B cell (primary cell): ENCODE measurements at regions of chr2 and their contacts with region 1.

Region 1: DNA sequence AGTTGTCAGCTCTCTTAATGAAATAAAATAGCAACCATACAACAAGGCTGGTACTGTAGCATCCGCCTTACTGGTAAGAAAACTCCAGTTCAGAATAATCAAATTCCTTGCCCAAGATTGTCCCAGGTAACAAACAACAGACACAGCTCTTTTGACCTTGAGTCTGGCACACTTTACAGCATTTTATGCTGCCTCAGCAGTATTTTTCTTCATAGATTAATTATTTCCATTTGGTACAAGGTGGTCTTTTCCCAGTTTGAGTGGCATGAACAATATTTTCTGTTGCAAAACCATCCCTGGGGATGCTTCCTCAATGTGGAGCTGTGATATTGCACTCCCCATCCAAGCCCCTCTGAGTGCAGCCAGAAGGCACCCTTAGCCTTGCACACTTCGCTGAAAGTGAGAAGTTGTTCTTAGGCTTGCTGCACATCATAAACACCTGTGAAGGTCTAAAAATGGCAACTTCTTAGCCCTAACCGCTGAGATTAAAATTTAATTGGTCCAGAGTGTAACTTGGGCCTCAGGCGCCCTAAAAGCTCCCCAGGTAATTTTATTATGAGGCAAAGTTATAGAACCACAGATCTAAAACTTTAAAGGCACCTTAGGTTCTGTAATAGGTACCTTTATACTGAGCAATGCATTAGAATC is 523.3 kb downstream of the CMPK2 start:
- DNase-seq: no peak
- ATAC-seq: no peak
- H3K4me3 ChIP-seq: no peak overlapping the region
- H3K4me3 Mint-ChIP-seq: no peak overlapping the region
- H3K27ac ChIP-seq: no peak overlapping the region
- H3K27ac Mint-ChIP-seq: no peak overlapping the region
- H3K4me1 ChIP-seq: peaks cover 41% of the 10 kb centered on the region in 2 donors
- H3K4me1 Mint-ChIP-seq: peaks cover 41% of the 10 kb centered on the region
- H3K27me3 ChIP-seq: no peaks in the 10 kb centered on the region
- H3K27me3 Mint-ChIP-seq: no peaks in the 10 kb centered on the region
- CTCF ChIP-seq: no peak

Region 2: DNA sequence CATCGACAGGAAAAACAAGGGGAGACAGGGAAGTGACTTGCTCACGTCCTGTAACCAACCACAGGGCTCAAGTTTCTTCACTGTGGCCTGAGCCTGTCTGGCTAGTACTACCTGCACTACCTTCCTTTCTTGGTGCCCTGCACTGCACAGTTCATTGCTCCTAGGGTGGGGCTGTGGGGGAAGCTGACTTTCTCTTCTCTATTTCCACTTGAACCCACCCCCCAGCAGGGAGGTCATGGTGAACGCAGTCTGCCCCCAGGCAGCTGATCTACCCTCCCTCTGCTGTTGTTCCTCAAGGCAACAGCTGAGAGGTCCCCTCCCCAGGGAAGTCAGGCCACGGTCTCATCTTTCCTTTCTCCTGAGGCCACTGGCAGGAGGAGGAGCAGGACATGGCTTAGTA is 118.1 kb before region 1 on chr2:
- CTCF ChIA-PET with region 1: no interaction called
- POLR2A ChIA-PET with region 1: no interaction called
- intact Hi-C with region 1: loop called (anchors 10 kb)
- DNase-seq: peak; percentile 70
- ATAC-seq: peak; percentile 95
- H3K4me3 ChIP-seq: no peak overlapping the region
- H3K4me3 Mint-ChIP-seq: peak overlapping the region; percentile 20
- H3K27ac ChIP-seq: peak overlapping the region; percentile 1 to 48
- H3K27ac Mint-ChIP-seq: peak overlapping the region; percentile 28
- H3K4me1 ChIP-seq: peaks cover 21 to 30% of the 10 kb centered on the region in 2 donors
- H3K4me1 Mint-ChIP-seq: peaks cover 33% of the 10 kb centered on the region
- H3K27me3 ChIP-seq: no peaks in the 10 kb centered on the region
- H3K27me3 Mint-ChIP-seq: no peaks in the 10 kb centered on the region
- CTCF ChIP-seq: no peak

Region 3: DNA sequence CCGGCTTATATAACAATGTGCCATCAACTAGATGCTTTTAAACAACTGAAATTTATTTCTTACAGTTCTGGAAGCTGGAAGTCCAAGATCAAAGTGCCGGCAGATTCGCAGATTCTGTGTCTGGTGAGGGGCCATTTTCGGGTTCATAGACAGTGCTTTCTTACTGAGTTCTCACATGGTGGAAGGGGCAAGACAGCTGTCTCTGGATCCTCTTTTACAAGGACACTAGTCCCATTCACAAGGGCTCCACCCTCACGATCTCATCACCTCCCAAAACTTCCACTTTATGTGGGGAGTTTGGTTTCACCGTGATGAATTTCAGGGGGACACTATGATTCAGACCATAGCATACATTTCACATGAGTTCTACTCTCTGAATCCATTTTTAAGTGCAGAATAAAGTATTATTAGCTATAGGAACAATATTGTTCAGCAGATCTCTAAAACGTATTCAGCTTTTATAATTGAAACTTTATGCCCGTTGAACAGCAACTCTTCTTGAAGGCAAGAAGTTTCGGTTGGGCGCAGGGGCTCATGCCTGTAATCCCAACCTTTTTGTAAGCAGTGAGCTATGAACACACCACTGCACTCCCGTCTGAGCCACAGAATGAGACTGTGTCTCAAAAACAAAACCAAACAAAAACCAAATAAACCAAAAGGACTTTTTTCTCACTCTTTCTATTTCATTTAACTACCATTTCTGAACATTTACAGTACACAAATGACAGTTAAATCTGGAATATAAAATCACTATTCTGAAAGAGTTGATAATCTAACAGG is 20.5 kb after region 1 on chr2:
- CTCF ChIA-PET with region 1: no interaction called
- POLR2A ChIA-PET with region 1: no interaction called
- intact Hi-C with region 1: no loop called
- DNase-seq: no peak
- ATAC-seq: no peak
- H3K4me3 ChIP-seq: no peak overlapping the region
- H3K4me3 Mint-ChIP-seq: no peak overlapping the region
- H3K27ac ChIP-seq: no peak overlapping the region
- H3K27ac Mint-ChIP-seq: no peak overlapping the region
- H3K4me1 ChIP-seq: no peaks in the 10 kb centered on the region
- H3K4me1 Mint-ChIP-seq: peaks cover 5% of the 10 kb centered on the region
- H3K27me3 ChIP-seq: no peaks in the 10 kb centered on the region
- H3K27me3 Mint-ChIP-seq: peaks cover 3% of the 10 kb centered on the region
- CTCF ChIP-seq: no peak

Region 4: GRCh38 chr2:6556755-6557154 is 214.4 kb after region 1 on chr2:
- CTCF ChIA-PET with region 1: no interaction called
- POLR2A ChIA-PET with region 1: no interaction called
- intact Hi-C with region 1: no loop called
- DNase-seq: no peak
- ATAC-seq: no peak
- H3K4me3 ChIP-seq: no peak overlapping the region
- H3K4me3 Mint-ChIP-seq: no peak overlapping the region
- H3K27ac ChIP-seq: no peak overlapping the region
- H3K27ac Mint-ChIP-seq: no peak overlapping the region
- H3K4me1 ChIP-seq: no peaks in the 10 kb centered on the region
- H3K4me1 Mint-ChIP-seq: no peaks in the 10 kb centered on the region
- H3K27me3 ChIP-seq: no peaks in the 10 kb centered on the region
- H3K27me3 Mint-ChIP-seq: no peaks in the 10 kb centered on the region
- CTCF ChIP-seq: no peak